ENCODE measurements at regions of chr10 and their contacts with region 1.

Region 1: DNA sequence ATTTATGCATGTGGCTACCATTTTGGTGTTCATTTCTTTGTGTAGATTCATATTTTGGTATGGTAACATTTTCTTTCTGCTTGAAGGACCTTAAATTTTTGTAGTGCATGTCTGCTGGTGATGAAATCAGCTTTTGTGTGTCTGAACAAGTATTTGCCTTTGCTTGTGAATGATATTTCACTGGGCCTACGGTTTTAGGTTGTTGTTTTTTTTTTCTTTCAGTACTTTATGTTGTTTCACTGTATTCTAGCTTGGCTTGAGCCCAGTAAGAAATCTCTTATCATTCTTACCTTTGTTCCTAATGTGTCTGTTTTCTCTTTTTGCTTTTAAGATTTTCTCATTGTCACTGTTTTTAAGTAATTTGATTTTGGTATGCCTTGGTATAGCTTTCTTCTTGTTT is 31.9 kb downstream of the SAMD8 start:
- DNase-seq: no peak
- ATAC-seq: no peak
- H3K4me3 ChIP-seq: no peak overlapping the region
- H3K4me3 Mint-ChIP-seq: no peak overlapping the region
- H3K27ac ChIP-seq: no peak overlapping the region
- H3K27ac Mint-ChIP-seq: peak overlapping the region; percentile 63 to 81
- H3K4me1 ChIP-seq: peaks cover 6 to 14% of the 10 kb centered on the region in 2 experiments
- H3K4me1 Mint-ChIP-seq: peaks cover 37 to 55% (median 51%) of the 10 kb centered on the region in 3 donors
- H3K27me3 ChIP-seq: no peaks in the 10 kb centered on the region
- H3K27me3 Mint-ChIP-seq: no peaks in the 10 kb centered on the region

Region 2: GRCh38 chr10:74123081-74123480 is 1020.3 kb before region 1 on chr10:
- CTCF ChIA-PET with region 1: interaction called in 1 of 2 experiments, 10 read pairs
- POLR2A ChIA-PET with region 1: no interaction called
- DNase-seq: no peak
- ATAC-seq: no peak
- H3K4me3 ChIP-seq: no peak overlapping the region
- H3K4me3 Mint-ChIP-seq: no peak overlapping the region
- H3K27ac ChIP-seq: no peak overlapping the region
- H3K27ac Mint-ChIP-seq: peak overlapping the region in 1 of 2 donors; percentile 23
- H3K4me1 ChIP-seq: no peaks in the 10 kb centered on the region
- H3K4me1 Mint-ChIP-seq: peaks cover 0 to 11% (median 2%) of the 10 kb centered on the region in 3 donors
- H3K27me3 ChIP-seq: no peaks in the 10 kb centered on the region
- H3K27me3 Mint-ChIP-seq: no peaks in the 10 kb centered on the region

Region 3: GRCh38 chr10:75922435-75922834 is 779.1 kb after region 1 on chr10:
- CTCF ChIA-PET with region 1: no interaction called
- POLR2A ChIA-PET with region 1: no interaction called
- DNase-seq: no peak
- ATAC-seq: no peak
- H3K4me3 ChIP-seq: no peak overlapping the region
- H3K4me3 Mint-ChIP-seq: no peak overlapping the region
- H3K27ac ChIP-seq: no peak overlapping the region
- H3K27ac Mint-ChIP-seq: no peak overlapping the region
- H3K4me1 ChIP-seq: no peaks in the 10 kb centered on the region
- H3K4me1 Mint-ChIP-seq: no peaks in the 10 kb centered on the region
- H3K27me3 ChIP-seq: peaks cover 0 to 5% of the 10 kb centered on the region in 2 experiments
- H3K27me3 Mint-ChIP-seq: peaks cover 5 to 10% of the 10 kb centered on the region in 2 donors